Heart left ventricle (tissue), 16 donors: ENCODE measurements at regions of chr15 and their contacts with region 1.

Region 1: GRCh38 chr15:59247364-59247763 is 40.7 kb downstream of the LDHAL6B start:
- DNase-seq: peak in 4 of 5 donors; percentile 46 to 54 (median 50)
- ATAC-seq: peak in 3 of 4 donors; percentile 76 to 86 (median 77)
- H3K4me3 ChIP-seq: no peak overlapping the region
- H3K27ac ChIP-seq: no peak overlapping the region
- H3K4me1 ChIP-seq: peaks cover 0 to 17% (median 4%) of the 10 kb centered on the region in 12 donors
- H3K27me3 ChIP-seq: no peaks in the 10 kb centered on the region
- CTCF ChIP-seq: peak; percentile 47 to 72 (median 58)
- POLR2A ChIP-seq: no peak

Region 2: DNA sequence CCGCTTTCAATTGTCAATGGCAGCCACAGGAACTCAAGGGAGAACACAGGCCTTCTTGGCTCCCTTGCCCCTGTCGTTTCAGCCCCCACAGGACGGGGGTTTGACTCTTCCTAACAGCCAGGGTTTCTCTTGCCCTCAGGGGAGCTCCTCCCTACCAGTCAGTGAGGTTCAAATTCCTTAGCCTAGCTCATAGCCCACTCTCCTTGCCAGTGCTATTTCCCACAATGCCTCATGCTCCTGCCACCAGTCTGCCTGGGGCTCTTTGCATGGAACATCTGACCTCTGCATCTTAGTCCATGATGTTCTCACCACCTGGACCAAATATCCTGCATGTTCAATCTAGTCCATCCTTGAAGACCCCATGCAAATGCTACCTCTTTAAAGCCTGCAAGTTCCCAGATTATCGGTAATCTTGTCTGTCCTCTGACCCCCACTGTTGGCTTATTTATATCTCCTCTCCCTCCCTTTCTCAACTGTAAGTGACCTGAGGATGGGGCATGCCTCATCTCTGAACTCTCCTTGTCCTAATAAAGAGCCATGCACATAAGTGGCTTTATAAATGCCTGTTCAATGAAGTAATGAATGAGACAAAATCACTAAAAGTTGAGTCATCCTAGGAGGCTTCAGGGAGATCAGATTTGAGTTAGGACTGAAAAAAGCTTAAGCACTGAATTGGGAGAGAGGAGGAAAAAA is 47.4 kb after region 1 on chr15:
- intact Hi-C with region 1: loop called in 1 of 10 experiments (anchors 5 kb)
- DNase-seq: no peak
- ATAC-seq: no peak
- H3K4me3 ChIP-seq: no peak overlapping the region
- H3K27ac ChIP-seq: peak overlapping the region in 11 of 12 donors; percentile 7 to 81 (median 51)
- H3K4me1 ChIP-seq: peaks cover 3 to 74% (median 34%) of the 10 kb centered on the region in 12 donors
- H3K27me3 ChIP-seq: no peaks in the 10 kb centered on the region
- CTCF ChIP-seq: no peak
- POLR2A ChIP-seq: no peak

Region 3: GRCh38 chr15:59372352-59373211 is 125.2 kb after region 1 on chr15 and contains the start of gene MYO1E:
- intact Hi-C with region 1: loop called in 8 of 10 experiments (anchors 2 to 10 kb)
- DNase-seq: peak; percentile 88 to 93 (median 91)
- ATAC-seq: peak; percentile 98
- H3K4me3 ChIP-seq: peak within 1 kb of the TSS; percentile 54 to 99 (median 88)
- H3K27ac ChIP-seq: peak within 1 kb of the TSS; percentile 82 to 98 (median 93)
- H3K4me1 ChIP-seq: peaks cover 0 to 29% (median 9%) of the 10 kb centered on the region in 12 donors
- H3K27me3 ChIP-seq: no peaks in the 10 kb centered on the region
- CTCF ChIP-seq: no peak
- POLR2A ChIP-seq: peak; percentile 87 to 96
- total RNA-seq, gene MYO1E: 12.0 to 98.6 (median 28.2) TPM

Region 4: GRCh38 chr15:59437817-59438562 is 190.6 kb after region 1 on chr15 and contains the start of gene FAM81A:
- intact Hi-C with region 1: loop called in 1 of 10 experiments (anchors 10 kb)
- DNase-seq: peak; percentile 91 to 94 (median 91)
- ATAC-seq: peak; percentile 97 to 99 (median 99)
- H3K4me3 ChIP-seq: peak within 1 kb of the TSS; percentile 50 to 86 (median 60)
- H3K27ac ChIP-seq: peak within 1 kb of the TSS in 8 of 12 donors; percentile 24 to 53 (median 37)
- H3K4me1 ChIP-seq: peaks cover 0 to 21% (median 14%) of the 10 kb centered on the region in 12 donors
- H3K27me3 ChIP-seq: peaks cover 0 to 17% (median 0%) of the 10 kb centered on the region in 9 donors
- CTCF ChIP-seq: no peak
- POLR2A ChIP-seq: no peak
- total RNA-seq, gene FAM81A: 1.1 to 4.5 (median 3.2) TPM